Natural killer cell (primary cell): ENCODE measurements at regions of chr12 and their contacts with region 1.

Region 1: DNA sequence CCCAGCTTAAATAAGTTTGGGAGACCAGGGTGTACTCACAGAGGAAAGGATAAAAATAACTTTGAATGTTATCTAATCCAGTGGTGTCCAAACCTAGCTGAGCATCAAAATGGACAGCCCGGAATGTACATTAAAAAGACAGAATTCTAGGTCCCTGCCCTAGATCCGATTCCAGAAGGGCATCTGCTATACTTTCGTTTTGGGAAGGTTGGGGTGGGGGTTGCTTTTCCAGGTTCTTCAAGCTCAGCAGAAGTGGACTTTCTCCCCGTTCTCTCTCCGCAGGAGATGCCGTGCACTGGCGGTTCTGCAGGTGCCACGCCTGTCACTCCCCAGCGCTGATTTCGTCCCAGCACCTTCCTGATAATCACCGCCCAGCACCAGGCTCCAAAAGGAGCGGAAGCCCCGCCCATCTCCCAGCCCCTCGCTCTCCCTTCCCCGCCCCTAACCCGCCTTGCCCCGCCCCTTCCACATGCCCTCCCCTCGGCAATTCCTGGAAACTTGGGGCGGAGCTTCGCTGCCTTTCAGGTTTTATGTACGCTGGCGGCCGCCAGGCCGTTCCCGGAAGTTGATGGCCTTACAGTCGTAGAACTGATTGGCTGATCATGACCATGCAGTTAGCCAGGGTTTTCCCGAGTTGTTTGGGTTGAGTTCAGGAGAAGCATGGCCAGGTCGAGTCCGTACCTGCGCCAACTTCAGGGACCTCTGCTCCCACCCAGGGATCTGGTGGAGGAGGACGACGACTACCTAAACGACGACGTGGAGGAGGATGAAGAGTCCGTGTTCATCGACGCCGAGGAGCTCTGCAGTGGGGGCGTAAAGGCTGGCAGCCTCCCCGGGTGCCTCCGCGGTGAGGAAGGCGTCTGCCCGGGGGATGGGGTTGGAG is at the start of gene HELB:
- DNase-seq: peak; percentile 82 to 97
- ATAC-seq: peak; percentile 86 to 94 (median 89)
- H3K4me3 ChIP-seq: peak within 1 kb of the TSS; percentile 91
- H3K4me3 Mint-ChIP-seq: peak within 1 kb of the TSS; percentile 98
- H3K27ac ChIP-seq: peak within 1 kb of the TSS; percentile 84
- H3K27ac Mint-ChIP-seq: peak within 1 kb of the TSS; percentile 82 to 99
- H3K4me1 ChIP-seq: peaks cover 14% of the 10 kb centered on the region
- H3K4me1 Mint-ChIP-seq: peaks cover 39 to 47% of the 10 kb centered on the region in 2 donors
- H3K27me3 ChIP-seq: no peaks in the 10 kb centered on the region
- H3K27me3 Mint-ChIP-seq: no peaks in the 10 kb centered on the region
- CTCF ChIP-seq: no peak
- total RNA-seq, gene HELB: 29.2 to 45.6 (median 36.6) TPM

Region 2: DNA sequence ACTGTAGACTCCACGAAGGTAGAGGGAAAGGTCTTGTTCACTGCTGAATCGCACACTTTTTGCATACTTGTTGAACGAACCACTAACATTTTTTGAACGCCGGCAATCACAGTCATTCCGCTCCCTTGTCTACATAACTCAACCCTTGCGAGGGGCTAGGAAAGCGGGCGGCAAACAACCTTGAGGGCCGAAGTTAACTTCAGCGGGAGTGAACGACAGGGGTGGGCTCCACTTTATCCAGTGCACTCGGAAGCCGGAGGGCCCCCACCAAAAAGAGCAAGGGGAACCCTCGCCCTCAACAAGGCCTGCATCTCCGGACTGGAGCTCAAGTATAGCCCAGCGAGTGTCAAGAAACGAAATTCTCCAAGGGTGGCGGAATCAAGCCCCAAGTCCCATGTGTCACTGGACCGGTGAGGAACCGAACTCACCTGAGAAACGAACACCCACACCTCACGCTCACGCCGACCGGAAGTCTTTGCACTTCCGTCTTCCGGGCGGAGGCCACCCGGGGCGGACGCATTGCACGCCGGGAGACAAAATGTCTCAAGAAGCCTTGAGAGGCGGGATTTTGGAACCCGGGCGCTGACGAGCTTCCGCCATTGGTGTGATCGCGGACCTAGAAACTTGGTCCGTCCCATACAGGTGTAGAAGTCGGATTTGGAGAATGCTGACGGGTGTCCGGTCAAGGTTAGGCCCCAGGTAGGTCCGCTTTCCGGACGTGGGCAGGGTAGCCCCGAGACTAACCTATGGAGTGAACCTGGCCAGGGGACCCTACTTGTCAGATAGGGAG is 171.7 kb before region 1 on chr12 and contains the start of gene LLPH:
- intact Hi-C with region 1: loop called (anchors 10 kb)
- DNase-seq: peak; percentile 79 to 94
- ATAC-seq: peak; percentile 95 to 97 (median 97)
- H3K4me3 ChIP-seq: peak within 1 kb of the TSS; percentile 79
- H3K4me3 Mint-ChIP-seq: peak within 1 kb of the TSS; percentile 96
- H3K27ac ChIP-seq: peak within 1 kb of the TSS; percentile 91
- H3K27ac Mint-ChIP-seq: peak within 1 kb of the TSS; percentile 96 to 97
- H3K4me1 ChIP-seq: peaks cover 10% of the 10 kb centered on the region
- H3K4me1 Mint-ChIP-seq: peaks cover 50 to 58% of the 10 kb centered on the region in 2 donors
- H3K27me3 ChIP-seq: no peaks in the 10 kb centered on the region
- H3K27me3 Mint-ChIP-seq: no peaks in the 10 kb centered on the region
- CTCF ChIP-seq: no peak
- total RNA-seq, gene LLPH: 24.9 to 27.3 (median 25.5) TPM

Region 3: GRCh38 chr12:67268896-67269631 is 966.9 kb after region 1 on chr12 and contains the start of gene CAND1:
- intact Hi-C with region 1: loop called (anchors 5 kb)
- DNase-seq: peak; percentile 92 to 99
- ATAC-seq: peak; percentile 81 to 93 (median 83)
- H3K4me3 ChIP-seq: peak within 1 kb of the TSS; percentile 88
- H3K4me3 Mint-ChIP-seq: peak within 1 kb of the TSS; percentile 83
- H3K27ac ChIP-seq: peak within 1 kb of the TSS; percentile 97
- H3K27ac Mint-ChIP-seq: peak within 1 kb of the TSS; percentile 95 to 97
- H3K4me1 ChIP-seq: peaks cover 21% of the 10 kb centered on the region
- H3K4me1 Mint-ChIP-seq: peaks cover 36 to 43% of the 10 kb centered on the region in 2 donors
- H3K27me3 ChIP-seq: no peaks in the 10 kb centered on the region
- H3K27me3 Mint-ChIP-seq: no peaks in the 10 kb centered on the region
- CTCF ChIP-seq: no peak
- total RNA-seq, gene CAND1: 103 to 118 (median 104) TPM